H1 (cell line): ENCODE measurements at regions of chr17 and their contacts with region 1.

Region 1: DNA sequence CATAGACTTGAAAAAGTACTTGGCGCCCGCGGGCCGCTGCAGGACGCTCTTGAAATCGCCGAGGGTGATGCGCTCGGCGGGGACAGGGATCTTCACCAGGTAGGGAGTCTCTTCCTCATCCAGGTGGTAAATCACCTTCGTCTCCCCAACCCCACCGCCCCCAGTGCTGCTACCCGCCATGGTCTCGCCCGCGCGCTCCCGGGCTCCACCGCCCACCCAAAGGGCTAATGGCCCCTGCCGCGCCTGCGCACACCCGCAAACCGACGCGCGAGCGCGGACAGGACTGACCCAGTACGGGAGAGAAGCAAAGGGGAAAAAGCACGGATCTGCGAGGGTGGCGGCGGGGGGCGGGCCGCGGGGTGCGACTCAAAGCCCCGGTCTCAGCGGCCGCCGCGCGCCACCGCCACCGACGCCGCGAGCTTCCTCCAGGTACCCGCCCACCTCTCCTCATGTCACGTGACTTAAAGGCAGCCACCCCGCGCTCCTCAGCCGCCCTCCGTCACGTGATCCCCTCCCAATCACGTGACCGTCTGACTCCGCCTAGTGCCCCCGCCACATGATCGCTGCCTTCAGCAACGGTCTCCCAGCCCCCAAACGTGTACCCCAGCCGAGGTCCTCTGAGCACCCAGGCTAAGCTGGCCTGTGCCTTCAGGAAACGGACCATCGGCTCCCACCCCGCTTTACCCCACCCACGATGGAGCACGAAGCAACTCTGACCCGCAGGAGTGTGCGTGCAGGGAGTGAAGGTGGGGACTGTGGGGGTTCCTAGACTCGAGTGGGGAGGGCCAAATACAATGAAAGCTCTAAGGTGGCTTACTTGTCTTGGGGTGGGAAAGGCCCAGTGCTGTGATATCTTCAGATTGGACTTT is at the start of gene DVL2:
- DNase-seq: peak in 1 of 2 experiments; percentile 95
- H3K4me3 ChIP-seq: peak within 1 kb of the TSS; percentile 68 to 89 (median 80)
- H3K27ac ChIP-seq: peak within 1 kb of the TSS; percentile 71
- H3K4me1 ChIP-seq: peaks cover 3 to 14% (median 6%) of the 10 kb centered on the region in 4 experiments; a peak in 6 of 7 replicates
- H3K27me3 ChIP-seq: no peaks in the 10 kb centered on the region
- CTCF ChIP-seq: no peak
- EP300 ChIP-seq: 0 out of 3 replicates have a peak, but pooled peaks of 1 of the 2 experiments have one; percentile 61
- POLR2A ChIP-seq: peak; percentile 66 to 89
- RAD21 ChIP-seq: no peak; a peak in 1 of 4 replicates
- total RNA-seq, gene DVL2: 59.3 and 59.6 TPM in 2 replicates

Region 2: DNA sequence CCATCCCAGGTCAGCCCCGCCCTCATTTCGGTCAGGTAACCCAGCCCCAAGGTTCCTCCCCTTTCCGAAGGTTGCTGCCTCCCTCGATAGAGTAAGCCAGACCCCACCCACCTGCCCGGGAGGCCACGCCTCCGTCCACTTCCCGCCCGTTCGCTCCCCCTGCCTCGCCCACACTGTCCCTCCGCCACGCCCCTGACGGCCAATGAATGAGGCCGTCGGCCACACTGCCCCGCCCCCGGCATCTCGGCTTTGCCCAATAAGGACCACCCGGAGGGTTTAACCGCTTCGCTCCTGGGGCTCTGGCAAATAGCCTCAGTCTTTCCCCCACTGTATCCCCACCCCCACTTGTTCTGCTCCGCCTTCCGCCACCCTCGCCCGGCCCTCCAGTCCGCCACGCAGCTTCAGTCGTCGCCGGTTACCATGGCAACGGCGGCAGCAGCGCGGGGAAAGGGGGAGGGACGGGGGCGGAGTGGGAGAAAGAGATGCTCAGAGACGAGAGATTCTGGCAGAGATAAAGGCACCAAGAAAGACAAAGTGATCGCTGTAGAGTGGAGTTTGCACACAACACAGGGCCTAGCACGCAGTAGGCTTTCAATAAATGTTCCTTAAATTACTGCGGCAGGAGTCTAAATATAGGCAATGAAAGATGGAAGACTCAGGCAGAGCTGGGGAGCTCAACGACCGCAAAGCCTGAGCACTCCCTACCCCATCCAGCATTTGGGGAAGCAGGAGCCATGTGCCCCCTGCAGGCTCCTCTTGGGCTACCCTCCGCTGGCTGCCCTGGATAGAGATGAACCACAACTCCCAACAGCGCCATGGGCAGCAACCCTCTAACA is 19.8 kb before region 1 on chr17:
- CTCF ChIA-PET with region 1: interaction called, 46 read pairs
- POLR2A ChIA-PET with region 1: interaction called, 386 read pairs
- DNase-seq: peak; percentile 99 to 100
- H3K4me3 ChIP-seq: peak overlapping the region; percentile 44 to 68 (median 50); a peak in 7 of 8 replicates
- H3K27ac ChIP-seq: peak overlapping the region; percentile 86
- H3K4me1 ChIP-seq: peaks cover 9 to 45% (median 28%) of the 10 kb centered on the region in 4 experiments
- H3K27me3 ChIP-seq: no peaks in the 10 kb centered on the region
- CTCF ChIP-seq: peak; percentile 32 to 76 (median 63)
- EP300 ChIP-seq: peak in 1 of 2 experiments; percentile 7; a peak in 1 of 3 replicates
- POLR2A ChIP-seq: no peak
- RAD21 ChIP-seq: peak; percentile 23; a peak in 2 of 4 replicates

Region 3: DNA sequence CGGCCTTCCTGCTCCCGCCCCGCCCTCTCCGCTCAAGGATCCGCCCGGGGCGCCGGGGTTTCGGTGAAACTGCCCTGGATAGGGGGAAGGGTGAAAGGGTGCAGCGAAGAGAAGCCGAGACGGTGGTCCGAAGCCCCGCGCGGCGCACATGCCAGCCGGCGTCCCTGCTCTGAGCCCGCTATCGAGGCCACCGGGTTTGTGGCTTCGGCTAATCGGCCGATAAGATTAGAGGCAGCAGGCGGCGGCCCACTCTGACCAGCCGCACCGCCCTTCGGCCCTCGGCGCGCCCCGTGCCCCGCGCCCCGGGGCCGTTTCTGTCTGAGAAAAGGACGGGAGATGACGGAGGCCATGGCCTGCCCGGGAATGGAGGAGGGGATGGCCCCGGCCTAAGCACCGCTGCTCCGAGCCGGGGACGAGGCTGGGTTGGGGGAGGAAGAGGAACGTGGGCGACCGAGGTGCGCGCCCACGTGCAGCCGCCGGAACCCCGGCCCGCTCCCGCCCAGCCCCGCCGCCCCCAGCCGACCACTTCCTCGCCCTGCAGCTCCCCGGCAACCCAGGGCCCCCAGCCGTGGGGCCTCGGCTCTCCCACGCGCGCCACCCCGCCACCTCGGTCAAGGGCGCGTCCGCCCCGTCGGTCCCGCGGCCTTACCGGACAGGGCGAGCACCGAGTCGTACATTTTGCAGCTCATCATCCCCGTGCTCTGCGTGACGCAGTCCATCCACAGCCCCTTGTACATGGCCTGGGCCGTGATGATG is 27.0 kb after region 1 on chr17:
- CTCF ChIA-PET with region 1: no interaction called
- POLR2A ChIA-PET with region 1: interaction called, 161 read pairs
- DNase-seq: peak in 1 of 2 experiments; percentile 86
- H3K4me3 ChIP-seq: peak overlapping the region; percentile 93 to 98 (median 96)
- H3K27ac ChIP-seq: peak overlapping the region; percentile 91
- H3K4me1 ChIP-seq: peaks cover 4 to 15% (median 6%) of the 10 kb centered on the region in 4 experiments; a peak in 6 of 7 replicates
- H3K27me3 ChIP-seq: no peaks in the 10 kb centered on the region
- CTCF ChIP-seq: no peak
- EP300 ChIP-seq: peak in 1 of 2 experiments; percentile 96; a peak in 2 of 3 replicates
- POLR2A ChIP-seq: peak; percentile 72 to 91
- RAD21 ChIP-seq: no peak